T-cell (primary cell): ENCODE measurements at regions of chr5 and their contacts with region 1.

Region 1: GRCh38 chr5:14487897-14488570 is 93.6 kb upstream of the OTULINL start:
- DNase-seq: no peak
- ATAC-seq: no peak
- H3K4me3 ChIP-seq: no peak overlapping the region
- H3K4me3 Mint-ChIP-seq: no peak overlapping the region
- H3K27ac ChIP-seq: no peak overlapping the region
- H3K27ac Mint-ChIP-seq: no peak overlapping the region
- H3K4me1 ChIP-seq: peaks cover 0 to 2% of the 10 kb centered on the region in 2 experiments
- H3K4me1 Mint-ChIP-seq: peaks cover 0 to 10% (median 0%) of the 10 kb centered on the region in 3 donors
- H3K27me3 ChIP-seq: peaks cover 0 to 2% of the 10 kb centered on the region in 2 experiments
- H3K27me3 Mint-ChIP-seq: no peaks in the 10 kb centered on the region

Region 2: DNA sequence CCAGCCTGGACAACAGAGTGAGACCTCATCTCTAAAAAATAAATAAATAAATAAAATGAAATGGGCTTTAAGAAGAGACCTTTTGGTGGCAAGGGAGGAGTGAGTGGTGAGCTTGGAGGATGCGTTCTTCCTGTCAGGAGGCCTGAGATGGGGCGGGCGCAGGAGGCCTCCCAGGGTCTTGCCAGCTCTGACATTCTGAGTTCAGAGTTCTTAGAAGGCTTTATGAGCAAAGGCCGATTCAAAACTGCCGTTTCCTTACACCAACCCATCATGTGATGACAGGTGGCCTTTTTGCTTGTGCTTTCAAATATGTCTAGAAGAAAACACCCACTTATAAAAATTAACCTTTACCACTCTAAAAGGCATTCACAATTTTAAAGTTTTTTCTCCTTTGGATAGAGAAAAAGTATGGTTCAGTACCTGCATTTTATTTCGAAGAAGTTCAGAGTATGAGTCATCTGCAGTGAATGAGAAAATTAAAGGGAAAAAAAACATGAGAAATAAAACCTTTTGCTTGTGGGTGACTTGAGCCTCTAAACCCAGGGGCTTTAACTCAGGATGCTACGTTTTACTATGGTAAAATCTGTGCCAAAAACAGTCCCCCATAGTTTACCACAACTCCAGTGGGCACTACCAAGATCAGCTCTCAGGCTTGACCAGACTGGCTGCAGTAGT is 63.9 kb before region 1 on chr5:
- CTCF ChIA-PET with region 1: interaction called in 1 of 2 experiments, 13 read pairs
- POLR2A ChIA-PET with region 1: no interaction called
- DNase-seq: no peak
- ATAC-seq: peak in 2 of 4 experiments; percentile 61 to 67
- H3K4me3 ChIP-seq: no peak overlapping the region
- H3K4me3 Mint-ChIP-seq: no peak overlapping the region
- H3K27ac ChIP-seq: no peak overlapping the region
- H3K27ac Mint-ChIP-seq: peak overlapping the region in 1 of 2 donors; percentile 55
- H3K4me1 ChIP-seq: peaks cover 0 to 3% of the 10 kb centered on the region in 2 experiments
- H3K4me1 Mint-ChIP-seq: peaks cover 8 to 13% (median 9%) of the 10 kb centered on the region in 3 donors
- H3K27me3 ChIP-seq: peaks cover 0 to 6% of the 10 kb centered on the region in 2 experiments
- H3K27me3 Mint-ChIP-seq: no peaks in the 10 kb centered on the region